ENCODE measurements at regions of chr11 and their contacts with region 1.

Region 1: DNA sequence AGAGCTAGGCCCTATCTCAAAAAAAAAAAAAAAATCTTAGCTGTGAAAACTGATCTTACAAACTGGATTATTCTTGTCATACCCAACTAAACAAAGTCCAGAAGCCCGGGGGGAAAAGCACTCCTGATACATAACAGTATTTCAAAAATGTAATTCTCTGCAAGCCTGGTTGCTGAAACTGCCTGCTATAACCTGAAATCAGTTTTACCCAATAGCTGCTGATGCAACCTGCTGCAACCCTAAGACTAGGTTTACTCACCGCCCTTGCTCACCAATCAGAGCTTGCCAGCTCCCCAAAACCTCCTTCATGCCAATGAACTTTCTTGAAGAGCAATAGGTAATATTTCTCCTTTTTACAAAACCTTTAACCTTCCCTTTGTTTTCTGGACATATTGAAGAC is 12.4 kb downstream of the FGF19 start:
- DNase-seq: no peak
- ATAC-seq: no peak
- H3K4me3 ChIP-seq: no peak overlapping the region
- H3K27ac ChIP-seq: no peak overlapping the region
- H3K4me1 ChIP-seq: peaks cover 0 to 2% (median 0%) of the 10 kb centered on the region in 3 donors
- H3K27me3 ChIP-seq: no peaks in the 10 kb centered on the region
- CTCF ChIP-seq: no peak

Region 2: GRCh38 chr11:68690671-68691401 is 1000.6 kb before region 1 on chr11:
- intact Hi-C with region 1: no loop called
- DNase-seq: no peak
- ATAC-seq: no peak
- H3K4me3 ChIP-seq: no peak overlapping the region
- H3K27ac ChIP-seq: no peak overlapping the region
- H3K4me1 ChIP-seq: no peaks in the 10 kb centered on the region
- H3K27me3 ChIP-seq: peaks cover 0 to 3% (median 0%) of the 10 kb centered on the region in 4 donors
- CTCF ChIP-seq: no peak

Region 3: GRCh38 chr11:69588270-69588669 is 103.2 kb before region 1 on chr11:
- intact Hi-C with region 1: no loop called
- DNase-seq: no peak
- ATAC-seq: no peak
- H3K4me3 ChIP-seq: no peak overlapping the region
- H3K27ac ChIP-seq: no peak overlapping the region
- H3K4me1 ChIP-seq: no peaks in the 10 kb centered on the region
- H3K27me3 ChIP-seq: no peaks in the 10 kb centered on the region
- CTCF ChIP-seq: no peak

Region 4: DNA sequence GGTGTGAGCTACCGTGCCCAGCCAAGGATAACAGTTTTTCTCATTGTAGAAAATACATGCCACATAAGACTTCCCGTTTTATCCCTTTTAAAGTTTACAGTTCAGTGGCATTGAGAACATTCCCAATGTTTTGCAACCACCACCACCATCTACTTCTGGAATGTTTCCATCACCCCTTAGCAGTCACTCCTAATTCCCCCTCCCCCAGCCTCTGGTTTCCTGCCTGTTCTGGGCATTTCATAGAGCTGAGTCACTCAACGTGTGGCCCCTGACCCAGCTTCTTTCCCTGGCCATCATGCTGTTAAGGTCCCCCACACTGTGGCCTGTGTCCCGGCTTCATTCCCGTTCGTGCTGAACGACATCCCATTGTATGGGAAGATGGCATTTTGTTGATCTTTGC is 53.0 kb after region 1 on chr11:
- intact Hi-C with region 1: no loop called
- DNase-seq: no peak
- ATAC-seq: no peak
- H3K4me3 ChIP-seq: no peak overlapping the region
- H3K27ac ChIP-seq: no peak overlapping the region
- H3K4me1 ChIP-seq: no peaks in the 10 kb centered on the region
- H3K27me3 ChIP-seq: no peaks in the 10 kb centered on the region
- CTCF ChIP-seq: no peak

Region 5: DNA sequence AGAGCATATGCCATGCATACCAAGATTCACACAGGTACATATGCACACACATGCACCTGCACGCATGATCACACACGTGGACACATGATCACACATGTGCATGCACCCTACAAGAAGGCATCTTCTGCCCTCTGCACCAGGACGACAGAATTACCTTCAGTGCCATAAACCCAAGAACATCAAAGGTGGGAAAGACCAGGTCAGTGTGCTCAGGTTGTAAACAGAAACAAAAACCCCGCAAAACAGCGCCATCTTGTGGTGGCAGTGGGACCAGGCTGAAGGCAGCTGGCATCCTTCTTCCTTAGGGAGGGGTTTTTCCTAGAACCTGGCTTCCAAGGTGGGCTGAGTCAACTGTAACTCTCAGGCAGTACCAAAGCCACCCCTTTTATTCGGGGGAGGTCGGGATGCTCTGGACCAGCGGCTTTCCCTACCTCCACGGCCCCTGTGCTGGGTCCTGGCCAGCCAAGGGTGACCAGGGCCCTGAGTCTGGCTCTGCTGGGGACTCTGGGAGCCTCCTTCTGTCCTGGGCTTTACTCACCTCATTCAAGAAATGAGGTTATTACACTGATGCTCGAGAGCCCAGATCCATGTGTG is 197.1 kb after region 1 on chr11:
- intact Hi-C with region 1: loop called in 2 of 3 experiments (anchors 5 kb)
- DNase-seq: peak; percentile 49 to 90 (median 71)
- ATAC-seq: peak; percentile 69 to 88 (median 77)
- H3K4me3 ChIP-seq: no peak overlapping the region
- H3K27ac ChIP-seq: no peak overlapping the region
- H3K4me1 ChIP-seq: no peaks in the 10 kb centered on the region
- H3K27me3 ChIP-seq: no peaks in the 10 kb centered on the region
- CTCF ChIP-seq: peak; percentile 67 to 95 (median 84)

Measured in pancreas (tissue), 10 donors.